ENCODE measurements at regions of chr19 and their contacts with region 1.

Region 1: DNA sequence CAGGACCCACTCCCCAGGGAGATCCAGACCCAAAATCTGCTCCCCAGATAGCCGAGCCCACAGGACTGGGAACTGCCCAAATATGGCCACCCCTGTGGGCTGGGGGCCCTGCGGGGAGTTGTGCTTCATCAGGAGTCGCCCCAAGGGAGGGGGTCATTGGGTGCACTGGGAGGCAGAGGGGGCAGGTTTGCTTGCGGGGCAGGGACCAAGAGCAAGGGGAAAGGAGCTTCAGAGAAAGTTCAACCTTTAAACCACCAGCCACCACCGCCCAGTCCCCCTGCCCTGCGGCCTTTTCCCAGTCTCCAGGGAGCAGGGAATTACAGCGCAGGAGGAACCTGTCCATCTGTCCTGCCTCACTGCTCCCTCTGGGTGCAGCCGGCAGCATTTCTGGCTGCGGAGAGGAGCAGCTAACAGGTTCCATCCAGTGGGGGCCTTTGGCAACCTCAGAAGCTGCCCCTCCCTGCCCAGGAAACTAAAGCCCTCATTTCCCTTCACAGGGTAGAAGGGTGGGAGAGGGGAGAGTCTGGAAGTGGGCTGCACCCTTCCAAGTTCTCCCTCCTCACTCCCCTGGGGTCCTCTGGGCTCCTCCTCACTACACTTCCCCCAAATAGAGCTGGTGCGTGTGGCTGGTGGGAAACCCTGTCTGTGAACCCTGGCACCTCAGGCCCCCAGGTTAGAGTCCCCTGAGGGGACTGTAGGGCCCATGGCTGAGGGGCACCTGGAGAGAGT is 13.8 kb upstream of the ASF1B start:
- DNase-seq: no peak
- ATAC-seq: no peak
- H3K4me3 ChIP-seq: peak overlapping the region; percentile 31
- H3K27ac ChIP-seq: peak overlapping the region; percentile 75
- H3K4me1 ChIP-seq: peaks cover 31% of the 10 kb centered on the region
- H3K27me3 ChIP-seq: no peaks in the 10 kb centered on the region
- CTCF ChIP-seq: no peak

Region 2: DNA sequence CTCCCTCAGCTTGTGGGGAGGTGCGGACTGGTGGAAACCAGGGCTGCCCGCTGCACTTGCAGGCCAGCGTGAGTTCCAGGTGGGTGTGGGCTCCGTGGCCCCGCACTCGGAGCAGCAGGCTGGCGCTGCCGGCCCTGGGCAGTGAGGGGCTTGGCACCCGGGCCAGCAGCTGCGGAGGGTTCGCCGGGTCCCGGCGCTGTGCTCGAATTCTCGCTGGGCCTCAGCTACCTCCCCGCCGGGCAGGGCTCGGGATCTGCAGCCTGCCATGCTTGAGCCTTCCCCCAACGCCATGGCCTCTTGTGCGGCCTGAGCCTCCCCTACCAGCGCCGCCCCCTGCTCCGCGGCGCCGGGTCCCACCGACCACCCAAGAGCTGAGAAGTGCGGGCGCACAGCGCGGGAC is 127.4 kb after region 1 on chr19:
- intact Hi-C with region 1: no loop called
- DNase-seq: no peak
- ATAC-seq: no peak
- H3K4me3 ChIP-seq: no peak overlapping the region
- H3K27ac ChIP-seq: no peak overlapping the region
- H3K4me1 ChIP-seq: no peaks in the 10 kb centered on the region
- H3K27me3 ChIP-seq: no peaks in the 10 kb centered on the region
- CTCF ChIP-seq: no peak

Region 3: GRCh38 chr19:14347999-14348889 is 198.0 kb after region 1 on chr19:
- intact Hi-C with region 1: loop called (anchors 10 kb)
- DNase-seq: peak; percentile 84
- ATAC-seq: peak; percentile 93
- H3K4me3 ChIP-seq: peak overlapping the region; percentile 25
- H3K27ac ChIP-seq: no peak overlapping the region
- H3K4me1 ChIP-seq: peaks cover 6% of the 10 kb centered on the region
- H3K27me3 ChIP-seq: no peaks in the 10 kb centered on the region
- CTCF ChIP-seq: peak; percentile 96